Activated CD8-positive, alpha-beta T cell treated with anti-CD3 and anti-CD28 coated beads for 36 hours (primary cell): ENCODE measurements at regions of chr12 and their contacts with region 1.

Region 1: GRCh38 chr12:56041552-56042429 is at the start of gene RPS26:
- DNase-seq: peak; percentile 97
- ATAC-seq: peak; percentile 90
- H3K4me3 Mint-ChIP-seq: peak within 1 kb of the TSS; percentile 84
- H3K27ac Mint-ChIP-seq: peak within 1 kb of the TSS; percentile 92
- H3K4me1 Mint-ChIP-seq: peaks cover 52% of the 10 kb centered on the region
- H3K27me3 Mint-ChIP-seq: no peaks in the 10 kb centered on the region
- CTCF ChIP-seq: peak; percentile 57
- total RNA-seq, gene RPS26: 29.7 to 29.8 TPM

Region 2: DNA sequence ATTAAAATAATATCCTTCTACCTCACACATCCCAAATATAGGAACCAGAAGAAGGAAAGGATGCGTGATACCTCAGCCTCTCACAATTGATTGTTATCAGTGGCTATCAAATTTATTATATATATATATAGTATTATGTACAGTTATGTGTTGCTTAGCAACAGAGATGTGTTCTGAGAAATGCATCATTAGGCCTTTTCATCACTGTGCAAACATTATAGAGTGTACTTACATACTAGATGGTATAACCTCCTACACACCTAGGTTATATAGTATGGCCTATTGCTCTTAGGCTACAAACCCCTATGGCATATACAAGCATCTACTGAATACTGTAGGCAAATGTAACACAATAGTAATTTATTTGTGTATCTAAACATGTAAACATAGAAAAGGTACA is 148.1 kb before region 1 on chr12:
- CTCF ChIA-PET with region 1: no interaction called
- POLR2A ChIA-PET with region 1: no interaction called
- intact Hi-C with region 1: no loop called
- DNase-seq: no peak
- ATAC-seq: no peak
- H3K4me3 Mint-ChIP-seq: no peak overlapping the region
- H3K27ac Mint-ChIP-seq: no peak overlapping the region
- H3K4me1 Mint-ChIP-seq: peaks cover 1% of the 10 kb centered on the region
- H3K27me3 Mint-ChIP-seq: no peaks in the 10 kb centered on the region
- CTCF ChIP-seq: no peak

Region 3: GRCh38 chr12:56014206-56014605 is 27.6 kb before region 1 on chr12:
- CTCF ChIA-PET with region 1: interaction called, 7 read pairs
- POLR2A ChIA-PET with region 1: interaction called, 14 read pairs
- intact Hi-C with region 1: no loop called
- DNase-seq: no peak
- ATAC-seq: no peak
- H3K4me3 Mint-ChIP-seq: no peak overlapping the region
- H3K27ac Mint-ChIP-seq: no peak overlapping the region
- H3K4me1 Mint-ChIP-seq: peaks cover 36% of the 10 kb centered on the region
- H3K27me3 Mint-ChIP-seq: no peaks in the 10 kb centered on the region
- CTCF ChIP-seq: no peak

Region 4: GRCh38 chr12:56110571-56110970 is 68.8 kb after region 1 on chr12:
- CTCF ChIA-PET with region 1: interaction called, 53 read pairs
- POLR2A ChIA-PET with region 1: interaction called, 30 read pairs
- intact Hi-C with region 1: loop called (anchors 5 kb)
- DNase-seq: no peak
- ATAC-seq: no peak
- H3K4me3 Mint-ChIP-seq: no peak overlapping the region
- H3K27ac Mint-ChIP-seq: peak overlapping the region; percentile 73
- H3K4me1 Mint-ChIP-seq: peaks cover 31% of the 10 kb centered on the region
- H3K27me3 Mint-ChIP-seq: no peaks in the 10 kb centered on the region
- CTCF ChIP-seq: no peak

Region 5: GRCh38 chr12:56146492-56147460 is 105.0 kb after region 1 on chr12:
- CTCF ChIA-PET with region 1: no interaction called
- POLR2A ChIA-PET with region 1: no interaction called
- intact Hi-C with region 1: no loop called
- DNase-seq: no peak
- ATAC-seq: no peak
- H3K4me3 Mint-ChIP-seq: no peak overlapping the region
- H3K27ac Mint-ChIP-seq: no peak overlapping the region
- H3K4me1 Mint-ChIP-seq: peaks cover 36% of the 10 kb centered on the region
- H3K27me3 Mint-ChIP-seq: no peaks in the 10 kb centered on the region
- CTCF ChIP-seq: no peak